ENCODE measurements at regions of chr5 and their contacts with region 1.

Region 1: DNA sequence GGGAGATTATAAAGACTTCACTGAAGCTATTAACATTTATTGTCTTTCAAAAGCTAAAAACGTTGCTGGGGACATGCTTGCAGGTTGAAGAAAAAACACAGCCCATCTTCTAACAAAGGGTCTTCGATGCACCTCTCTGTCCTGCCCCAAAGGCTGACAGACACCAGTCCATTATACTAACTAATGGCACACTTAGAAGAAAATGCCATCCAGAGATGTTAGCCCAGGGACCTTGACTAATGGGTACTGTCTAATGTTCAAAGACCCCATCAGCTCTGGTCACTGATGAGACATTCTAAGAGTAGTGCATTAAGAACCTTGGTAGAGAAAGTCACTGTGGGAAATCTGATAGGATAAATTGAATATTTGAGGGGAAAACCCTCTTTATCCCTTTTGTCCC is 124.9 kb downstream of the EBF1 start:
- DNase-seq: no peak
- ATAC-seq: no peak
- H3K4me3 Mint-ChIP-seq: no peak overlapping the region
- H3K27ac Mint-ChIP-seq: peak overlapping the region; percentile 41
- H3K4me1 Mint-ChIP-seq: peaks cover 47% of the 10 kb centered on the region
- H3K27me3 Mint-ChIP-seq: no peaks in the 10 kb centered on the region
- CTCF ChIP-seq: no peak

Region 2: DNA sequence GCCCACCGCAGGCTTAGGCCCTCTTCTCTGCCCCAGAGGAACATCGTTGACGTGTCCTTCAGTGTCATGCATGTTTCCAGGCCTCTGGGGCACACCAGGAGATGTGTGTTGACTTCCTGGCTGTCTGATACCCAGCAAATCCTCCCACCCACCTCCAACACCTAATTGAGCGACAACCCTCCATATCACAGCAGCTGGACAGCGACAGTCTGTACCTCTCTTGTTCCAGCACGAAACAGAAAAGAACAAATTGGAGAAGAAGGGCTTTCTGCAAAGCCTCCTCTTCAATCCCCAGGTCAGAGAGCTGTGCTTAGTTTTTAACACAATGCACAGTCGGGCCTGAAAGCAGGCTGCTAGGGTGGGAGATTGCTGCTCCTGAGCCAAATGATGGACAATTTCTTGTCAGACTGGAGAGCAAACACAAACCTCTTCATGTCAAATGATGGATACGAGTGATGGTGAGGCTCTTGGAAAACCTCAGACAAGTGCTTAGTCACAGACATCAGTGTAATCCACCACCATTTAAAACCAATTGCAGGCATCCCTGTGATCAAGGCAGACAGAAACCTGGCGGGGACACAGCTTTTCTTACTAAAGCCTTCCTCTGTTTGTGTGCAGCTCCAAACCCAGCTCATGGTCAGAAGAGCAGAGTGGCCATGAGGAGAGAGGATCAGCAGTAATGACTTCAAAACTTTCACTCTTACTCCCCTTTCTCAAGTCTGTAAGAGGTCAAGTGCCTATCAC is 14.4 kb after region 1 on chr5:
- CTCF ChIA-PET with region 1: no interaction called
- POLR2A ChIA-PET with region 1: no interaction called
- intact Hi-C with region 1: loop called (anchors 2 kb)
- DNase-seq: no peak
- ATAC-seq: no peak
- H3K4me3 Mint-ChIP-seq: no peak overlapping the region
- H3K27ac Mint-ChIP-seq: no peak overlapping the region
- H3K4me1 Mint-ChIP-seq: peaks cover 76% of the 10 kb centered on the region
- H3K27me3 Mint-ChIP-seq: no peaks in the 10 kb centered on the region
- CTCF ChIP-seq: no peak

Region 3: GRCh38 chr5:159073026-159073425 is 98.3 kb after region 1 on chr5:
- CTCF ChIA-PET with region 1: no interaction called
- POLR2A ChIA-PET with region 1: interaction called, 10 read pairs
- intact Hi-C with region 1: no loop called
- DNase-seq: no peak
- ATAC-seq: no peak
- H3K4me3 Mint-ChIP-seq: no peak overlapping the region
- H3K27ac Mint-ChIP-seq: no peak overlapping the region
- H3K4me1 Mint-ChIP-seq: peaks cover 49% of the 10 kb centered on the region
- H3K27me3 Mint-ChIP-seq: no peaks in the 10 kb centered on the region
- CTCF ChIP-seq: no peak

Region 4: GRCh38 chr5:160221082-160221481 is 1246.3 kb after region 1 on chr5:
- CTCF ChIA-PET with region 1: no interaction called
- POLR2A ChIA-PET with region 1: no interaction called
- intact Hi-C with region 1: no loop called
- DNase-seq: no peak
- ATAC-seq: no peak
- H3K4me3 Mint-ChIP-seq: no peak overlapping the region
- H3K27ac Mint-ChIP-seq: no peak overlapping the region
- H3K4me1 Mint-ChIP-seq: no peaks in the 10 kb centered on the region
- H3K27me3 Mint-ChIP-seq: peaks cover 4% of the 10 kb centered on the region
- CTCF ChIP-seq: no peak